ENCODE measurements at regions of chr1 and their contacts with region 1.

Region 1: GRCh38 chr1:88877382-88877825 is 14.0 kb downstream of the GTF2B start:
- DNase-seq: peak; percentile 59
- H3K4me3 ChIP-seq: no peak overlapping the region
- H3K27ac ChIP-seq: no peak overlapping the region
- H3K4me1 ChIP-seq: peaks cover 12% of the 10 kb centered on the region
- H3K27me3 ChIP-seq: no peaks in the 10 kb centered on the region
- CTCF ChIP-seq: peak; percentile 66

Region 2: GRCh38 chr1:87612956-87613355 is 1264.4 kb before region 1 on chr1:
- CTCF ChIA-PET with region 1: no interaction called
- POLR2A ChIA-PET with region 1: no interaction called
- intact Hi-C with region 1: no loop called
- DNase-seq: no peak
- H3K4me3 ChIP-seq: no peak overlapping the region
- H3K27ac ChIP-seq: no peak overlapping the region
- H3K4me1 ChIP-seq: no peaks in the 10 kb centered on the region
- H3K27me3 ChIP-seq: no peaks in the 10 kb centered on the region
- CTCF ChIP-seq: no peak

Region 3: DNA sequence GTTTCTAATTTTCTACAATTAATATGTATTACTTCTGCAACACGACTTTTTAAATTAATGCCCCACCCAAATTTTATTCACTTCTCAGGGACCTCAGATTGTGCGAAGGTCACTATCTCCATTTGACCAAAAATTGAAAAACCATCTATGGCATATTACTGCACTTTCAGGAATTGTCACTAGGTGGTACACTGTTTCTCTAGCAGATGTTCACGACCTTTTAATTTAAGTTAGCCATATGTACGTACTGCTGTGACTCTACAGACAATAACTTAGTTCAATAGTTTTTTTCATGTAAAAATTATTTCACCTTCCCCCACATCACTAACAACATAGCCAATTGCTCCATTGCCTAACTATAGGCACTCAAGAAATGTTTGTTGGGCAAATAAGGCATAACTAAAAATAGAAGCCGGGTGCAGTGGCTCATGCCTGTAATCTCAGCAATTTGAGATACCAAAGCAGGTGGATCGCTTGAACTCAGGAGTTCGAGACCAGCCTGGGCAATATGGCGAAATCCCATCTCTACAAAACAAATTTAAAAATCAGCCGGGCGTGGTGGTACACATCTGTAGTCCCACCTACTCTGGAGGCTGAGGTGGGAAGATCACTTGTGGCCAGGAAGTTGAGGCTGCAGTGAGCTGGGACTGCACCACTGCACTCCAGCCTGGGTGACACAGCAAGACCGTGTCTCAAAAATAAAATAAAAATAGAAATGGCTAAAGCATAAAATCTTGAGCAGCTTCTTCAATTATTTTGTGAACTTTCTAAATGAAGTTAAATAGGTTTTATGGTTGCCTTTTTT is 269.1 kb before region 1 on chr1:
- CTCF ChIA-PET with region 1: no interaction called
- POLR2A ChIA-PET with region 1: no interaction called
- intact Hi-C with region 1: loop called (anchors 5 kb)
- DNase-seq: peak; percentile 49
- H3K4me3 ChIP-seq: no peak overlapping the region
- H3K27ac ChIP-seq: no peak overlapping the region
- H3K4me1 ChIP-seq: no peaks in the 10 kb centered on the region
- H3K27me3 ChIP-seq: no peaks in the 10 kb centered on the region
- CTCF ChIP-seq: peak; percentile 80

Region 4: DNA sequence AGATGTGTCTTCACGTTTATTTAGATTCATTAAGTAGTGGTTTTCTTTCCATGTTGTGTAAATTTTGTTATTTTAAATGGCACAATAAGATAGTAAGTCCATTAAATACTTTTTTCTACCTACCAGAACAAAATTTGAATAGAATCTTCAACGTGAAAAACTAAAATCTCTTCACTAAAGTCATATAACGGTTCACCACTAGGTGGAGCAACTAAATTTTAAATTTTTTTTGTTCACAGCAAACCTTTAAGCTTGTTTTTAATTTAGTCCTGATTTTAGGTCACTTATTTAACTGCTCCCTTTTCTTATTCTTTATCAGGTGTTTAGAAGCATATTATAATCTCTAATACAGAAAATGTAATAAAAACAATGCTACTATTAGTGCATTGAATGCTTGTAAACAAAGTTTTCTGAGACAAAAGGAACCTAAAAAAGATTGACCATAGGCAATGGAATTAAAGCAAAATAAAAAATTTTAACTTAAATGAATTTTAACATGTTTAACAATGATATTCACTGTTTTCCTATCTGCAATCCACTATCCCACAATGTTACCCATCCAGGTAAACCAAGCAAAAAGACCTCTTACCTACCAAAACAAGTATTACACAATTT is 221.6 kb before region 1 on chr1:
- CTCF ChIA-PET with region 1: no interaction called
- POLR2A ChIA-PET with region 1: no interaction called
- intact Hi-C with region 1: loop called (anchors 2 kb)
- DNase-seq: peak; percentile 36
- H3K4me3 ChIP-seq: no peak overlapping the region
- H3K27ac ChIP-seq: no peak overlapping the region
- H3K4me1 ChIP-seq: no peaks in the 10 kb centered on the region
- H3K27me3 ChIP-seq: no peaks in the 10 kb centered on the region
- CTCF ChIP-seq: peak; percentile 74

Region 5: DNA sequence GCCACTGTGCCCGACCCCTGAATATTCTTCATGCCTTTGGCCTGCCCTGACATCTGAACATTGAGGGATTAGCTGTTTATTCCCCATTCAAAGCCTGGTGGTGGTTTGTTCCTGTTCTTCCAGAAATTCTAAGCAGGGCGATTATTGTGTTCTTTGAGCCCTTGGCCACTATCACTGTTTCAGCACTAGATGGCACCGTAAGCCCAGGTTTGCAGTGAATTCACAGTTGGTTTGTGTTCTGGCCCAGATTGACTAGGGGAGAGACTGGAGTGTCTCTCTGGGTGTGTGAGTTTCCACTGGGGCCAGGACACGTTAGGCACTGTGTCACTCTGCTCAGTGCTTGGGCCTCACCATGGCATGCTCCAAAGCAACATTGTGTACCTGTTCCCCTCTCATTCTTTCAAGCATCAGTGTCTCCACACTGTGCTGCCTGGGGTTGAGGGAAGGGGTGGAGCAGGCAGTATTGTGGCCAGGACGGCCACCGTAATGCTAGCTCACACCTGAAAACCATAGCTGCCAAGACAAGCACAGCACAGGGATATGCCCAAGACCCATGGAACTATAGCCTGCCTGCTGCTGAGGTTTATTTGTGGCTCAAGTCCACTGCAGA is 140.7 kb before region 1 on chr1:
- CTCF ChIA-PET with region 1: no interaction called
- POLR2A ChIA-PET with region 1: no interaction called
- intact Hi-C with region 1: loop called (anchors 5 kb)
- DNase-seq: peak; percentile 77
- H3K4me3 ChIP-seq: no peak overlapping the region
- H3K27ac ChIP-seq: no peak overlapping the region
- H3K4me1 ChIP-seq: no peaks in the 10 kb centered on the region
- H3K27me3 ChIP-seq: no peaks in the 10 kb centered on the region
- CTCF ChIP-seq: peak; percentile 79

Region 6: GRCh38 chr1:88891318-88891950 is 14.0 kb after region 1 on chr1 and contains the start of gene GTF2B:
- CTCF ChIA-PET with region 1: interaction called, 10 read pairs
- POLR2A ChIA-PET with region 1: no interaction called
- intact Hi-C with region 1: no loop called
- DNase-seq: peak; percentile 96
- H3K4me3 ChIP-seq: peak within 1 kb of the TSS; percentile 79
- H3K27ac ChIP-seq: peak within 1 kb of the TSS; percentile 84
- H3K4me1 ChIP-seq: peaks cover 8% of the 10 kb centered on the region
- H3K27me3 ChIP-seq: no peaks in the 10 kb centered on the region
- CTCF ChIP-seq: no peak
- total RNA-seq, gene GTF2B: 28.9 and 31.9 TPM in 2 replicates

Measured in A673 (cell line).